ENCODE measurements at regions of chrX and their contacts with region 1.

Region 1: GRCh38 chrX:82081027-82081426 is 879.1 kb downstream of the SH3BGRL start:
- DNase-seq: no peak
- H3K4me3 ChIP-seq: no peak overlapping the region
- H3K4me3 Mint-ChIP-seq: no peak overlapping the region
- H3K27ac Mint-ChIP-seq: no peak overlapping the region
- H3K4me1 ChIP-seq: no peaks in the 10 kb centered on the region
- H3K4me1 Mint-ChIP-seq: no peaks in the 10 kb centered on the region
- H3K27me3 ChIP-seq: no peaks in the 10 kb centered on the region
- H3K27me3 Mint-ChIP-seq: no peaks in the 10 kb centered on the region
- CTCF ChIP-seq: no peak

Region 2: DNA sequence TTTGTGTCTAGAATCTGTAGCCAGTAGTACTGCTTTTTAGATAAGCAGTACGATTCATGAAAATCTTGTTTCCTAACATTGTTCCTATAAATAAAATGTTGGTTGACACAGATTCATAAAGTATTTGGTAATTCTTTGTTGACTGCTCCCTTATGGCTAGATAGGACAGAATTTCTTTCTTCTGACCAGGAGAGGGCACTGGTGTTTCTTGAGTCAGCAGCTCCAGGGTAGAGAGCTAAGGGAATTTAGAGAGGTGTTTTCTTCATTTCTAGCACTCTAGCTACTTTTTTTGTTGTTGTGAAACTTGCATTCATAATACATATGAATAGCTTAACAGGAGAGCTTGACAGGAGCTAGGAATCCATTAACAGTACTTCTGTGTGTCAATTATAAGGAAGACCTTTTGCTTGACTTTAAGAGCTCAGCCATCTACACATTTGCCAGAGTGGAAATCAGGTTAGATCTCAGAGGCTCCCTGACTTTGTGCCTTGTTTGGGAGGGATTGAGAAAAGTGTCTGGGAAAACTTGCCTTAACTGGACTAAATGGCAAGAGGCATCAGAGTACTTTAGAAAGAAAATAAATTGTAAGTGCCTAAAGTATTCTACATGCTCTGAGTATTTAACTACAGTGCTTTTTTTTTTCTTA is 123.0 kb before region 1 on chrX:
- CTCF ChIA-PET with region 1: no interaction called
- POLR2A ChIA-PET with region 1: no interaction called
- intact Hi-C with region 1: loop called (anchors 2 kb)
- DNase-seq: peak in 1 of 2 experiments; percentile 19
- H3K4me3 ChIP-seq: no peak overlapping the region
- H3K4me3 Mint-ChIP-seq: no peak overlapping the region
- H3K27ac Mint-ChIP-seq: no peak overlapping the region
- H3K4me1 ChIP-seq: no peaks in the 10 kb centered on the region
- H3K4me1 Mint-ChIP-seq: no peaks in the 10 kb centered on the region
- H3K27me3 ChIP-seq: no peaks in the 10 kb centered on the region
- H3K27me3 Mint-ChIP-seq: no peaks in the 10 kb centered on the region
- CTCF ChIP-seq: peak; percentile 20 to 48

Measured in Caco-2 (cell line).